Mammary epithelial cell (primary cell): ENCODE measurements at regions of chr19 and their contacts with region 1.

Region 1: GRCh38 chr19:18985257-18985656 is 44.2 kb upstream of the HOMER3 start:
- DNase-seq: no peak
- H3K4me3 ChIP-seq: no peak overlapping the region
- H3K27ac ChIP-seq: no peak overlapping the region
- H3K4me1 ChIP-seq: peaks cover 3% of the 10 kb centered on the region
- H3K27me3 ChIP-seq: peaks cover 1% of the 10 kb centered on the region
- CTCF ChIP-seq: no peak

Region 2: GRCh38 chr19:18865973-18866799 is 119.1 kb before region 1 on chr19:
- CTCF ChIA-PET with region 1: no interaction called
- dilution Hi-C with region 1: no loop called
- in situ Hi-C with region 1: no loop called
- intact Hi-C with region 1: loop called (anchors 1 kb)
- DNase-seq: peak; percentile 39
- H3K4me3 ChIP-seq: no peak overlapping the region
- H3K27ac ChIP-seq: no peak overlapping the region
- H3K4me1 ChIP-seq: peaks cover 14% of the 10 kb centered on the region
- H3K27me3 ChIP-seq: no peaks in the 10 kb centered on the region
- CTCF ChIP-seq: peak; percentile 81 to 88

Region 3: DNA sequence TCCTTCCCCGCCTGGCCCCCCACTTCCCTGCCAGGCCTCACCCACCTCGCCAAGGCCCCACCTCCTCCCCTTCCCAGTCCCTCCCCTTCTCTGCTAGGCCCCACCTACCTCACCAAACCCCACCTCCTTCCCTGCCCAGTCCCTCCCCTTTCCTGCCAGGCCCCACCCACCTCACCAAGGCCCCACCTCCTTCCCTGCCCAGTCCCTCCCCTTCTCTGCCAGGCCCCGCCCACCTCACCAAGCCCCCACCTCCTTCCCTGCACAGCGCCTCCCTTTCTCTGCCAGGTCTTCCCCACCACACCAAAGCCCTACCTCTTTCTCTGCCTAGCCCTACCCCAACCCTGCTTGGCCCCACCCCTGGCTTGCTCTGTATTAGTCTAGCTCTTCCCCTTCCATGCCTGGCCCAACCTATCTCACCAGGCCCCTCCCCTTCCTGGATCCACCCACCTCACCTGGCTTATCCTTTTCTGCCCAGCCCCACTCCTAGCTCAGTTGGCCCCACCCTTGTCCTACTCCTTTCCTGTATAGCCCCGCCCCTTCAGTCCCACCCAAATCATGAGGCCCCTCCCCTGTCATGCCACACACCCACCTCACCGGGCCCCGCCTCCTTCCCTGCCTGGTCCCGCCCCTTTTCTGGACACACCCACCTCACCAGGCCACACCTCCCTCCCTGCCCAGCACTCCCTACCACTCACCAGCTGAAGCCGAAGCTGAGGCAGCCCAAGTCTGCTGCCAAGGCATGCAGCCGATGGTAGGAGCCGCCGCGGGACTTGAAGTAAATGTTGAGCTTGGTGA is 105.5 kb before region 1 on chr19:
- CTCF ChIA-PET with region 1: no interaction called
- dilution Hi-C with region 1: no loop called
- in situ Hi-C with region 1: no loop called
- intact Hi-C with region 1: no loop called
- DNase-seq: peak; percentile 30
- H3K4me3 ChIP-seq: no peak overlapping the region
- H3K27ac ChIP-seq: no peak overlapping the region
- H3K4me1 ChIP-seq: no peaks in the 10 kb centered on the region
- H3K27me3 ChIP-seq: no peaks in the 10 kb centered on the region
- CTCF ChIP-seq: no peak

Region 4: GRCh38 chr19:18919086-18919899 is 66.0 kb before region 1 on chr19 and contains the starts of genes COPE and DDX49:
- CTCF ChIA-PET with region 1: interaction called, 11 read pairs
- dilution Hi-C with region 1: no loop called
- in situ Hi-C with region 1: no loop called
- intact Hi-C with region 1: loop called (anchors 1 kb)
- DNase-seq: peak; percentile 100
- H3K4me3 ChIP-seq: peak within 1 kb of the TSS; percentile 77 to 96 (median 85)
- H3K27ac ChIP-seq: peak within 1 kb of the TSS; percentile 90
- H3K4me1 ChIP-seq: peaks cover 15% of the 10 kb centered on the region
- H3K27me3 ChIP-seq: no peaks in the 10 kb centered on the region
- CTCF ChIP-seq: peak in 1 of 2 donors; percentile 10
- total RNA-seq, gene COPE: 180 to 226 TPM
- total RNA-seq, gene DDX49: 44.2 to 47.7 TPM

Region 5: DNA sequence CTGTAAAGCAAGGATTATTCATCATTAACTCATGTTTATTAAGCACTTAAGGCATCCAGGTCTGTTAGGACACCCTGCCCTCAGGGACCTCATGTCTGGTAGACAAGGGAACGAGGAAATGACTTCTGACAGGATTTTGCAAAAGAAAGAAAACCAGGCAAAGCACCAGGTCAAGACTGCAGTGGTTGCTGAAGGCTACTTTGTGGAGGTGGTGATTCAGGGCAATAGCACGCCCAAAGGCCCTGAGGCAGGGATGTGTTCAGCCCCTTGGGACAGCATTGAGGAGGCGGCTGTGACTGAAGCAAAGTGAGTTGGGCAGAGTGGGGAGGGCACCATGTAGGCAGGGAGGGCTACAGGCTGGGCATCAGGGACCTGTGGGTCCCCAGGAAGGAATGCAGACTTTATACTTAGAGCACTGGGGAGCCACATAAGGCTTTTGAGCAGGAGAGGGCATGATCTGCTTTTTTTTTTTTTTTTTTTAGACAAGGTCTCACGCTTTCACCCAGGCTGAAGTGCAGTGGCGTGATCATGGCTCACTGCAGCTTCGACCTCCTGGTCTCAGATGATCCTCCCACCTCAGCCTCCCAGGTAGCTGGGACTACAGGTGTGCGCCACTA is 33.5 kb before region 1 on chr19:
- CTCF ChIA-PET with region 1: no interaction called
- dilution Hi-C with region 1: loop called (anchors 5 kb)
- in situ Hi-C with region 1: no loop called
- intact Hi-C with region 1: loop called (anchors 2 kb)
- DNase-seq: peak; percentile 96
- H3K4me3 ChIP-seq: no peak overlapping the region
- H3K27ac ChIP-seq: no peak overlapping the region
- H3K4me1 ChIP-seq: peaks cover 24% of the 10 kb centered on the region
- H3K27me3 ChIP-seq: no peaks in the 10 kb centered on the region
- CTCF ChIP-seq: no peak

Region 6: GRCh38 chr19:19063183-19064097 is 78.2 kb after region 1 on chr19 and contains the start of gene SLC25A42:
- CTCF ChIA-PET with region 1: no interaction called
- dilution Hi-C with region 1: no loop called
- in situ Hi-C with region 1: no loop called
- intact Hi-C with region 1: no loop called
- DNase-seq: peak; percentile 99
- H3K4me3 ChIP-seq: peak within 1 kb of the TSS; percentile 56 to 82 (median 59)
- H3K27ac ChIP-seq: no peak within 1 kb of the TSS
- H3K4me1 ChIP-seq: peaks cover 23% of the 10 kb centered on the region
- H3K27me3 ChIP-seq: no peaks in the 10 kb centered on the region
- CTCF ChIP-seq: no peak
- total RNA-seq, gene SLC25A42: 3.0 to 5.1 TPM

Region 7: DNA sequence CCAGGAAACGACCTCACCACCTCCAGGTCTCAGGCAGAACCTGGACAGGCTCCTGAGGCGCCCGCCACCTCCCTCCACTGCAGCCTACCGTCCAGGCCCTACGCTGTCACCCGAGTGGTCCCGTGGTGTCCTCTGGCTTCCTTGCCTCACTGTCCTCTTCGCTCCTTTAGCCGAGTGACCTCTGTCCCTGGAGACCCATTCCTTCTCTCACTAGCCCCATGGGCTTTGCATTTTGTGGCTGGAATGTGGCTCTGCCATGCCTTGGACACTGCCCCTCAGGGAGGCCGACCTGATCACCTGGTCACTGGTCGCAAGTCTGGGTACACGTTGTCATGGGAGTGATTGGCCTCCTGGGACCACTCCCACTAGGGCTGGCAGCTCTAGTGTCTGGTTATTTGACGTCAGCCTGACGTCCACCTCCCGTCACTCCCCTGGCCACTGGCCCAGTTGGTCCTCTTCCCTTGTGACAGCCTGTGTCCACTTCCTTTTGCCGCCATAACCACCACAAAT is 96.4 kb after region 1 on chr19:
- CTCF ChIA-PET with region 1: no interaction called
- dilution Hi-C with region 1: no loop called
- in situ Hi-C with region 1: no loop called
- intact Hi-C with region 1: no loop called
- DNase-seq: no peak
- H3K4me3 ChIP-seq: no peak overlapping the region
- H3K27ac ChIP-seq: no peak overlapping the region
- H3K4me1 ChIP-seq: no peaks in the 10 kb centered on the region
- H3K27me3 ChIP-seq: no peaks in the 10 kb centered on the region
- CTCF ChIP-seq: no peak